ENCODE measurements at regions of chr2 and their contacts with region 1.

Region 1: DNA sequence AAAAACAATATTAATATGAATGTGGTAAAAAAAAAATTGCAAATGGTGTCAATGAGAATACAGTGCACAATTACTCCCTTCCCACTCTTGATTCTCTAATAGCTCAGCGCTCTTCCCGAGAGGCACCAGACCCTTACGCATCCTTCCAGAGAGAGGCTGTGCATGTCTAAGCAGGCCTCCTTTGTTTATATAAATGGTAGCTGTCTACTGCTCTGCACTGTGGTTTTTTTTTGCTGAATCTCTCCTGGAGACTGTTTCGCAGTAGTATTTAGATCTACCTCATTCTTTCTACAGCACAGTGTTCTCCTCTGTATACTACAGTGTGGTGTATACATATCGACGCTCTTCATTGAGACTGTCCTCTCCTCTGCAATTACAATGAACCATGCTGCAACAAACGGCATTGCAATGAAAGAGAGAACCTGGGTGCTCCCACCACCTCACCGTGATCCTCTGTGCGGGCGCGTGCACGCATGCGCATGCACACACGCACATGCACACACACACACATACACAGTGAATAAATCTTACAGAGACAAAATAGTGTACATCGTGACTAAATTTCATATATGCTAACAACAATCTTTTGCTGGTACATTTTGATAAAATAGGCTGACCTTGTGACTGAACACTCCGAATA is 19.4 kb downstream of the SEPTIN10 start:
- DNase-seq: no peak
- ATAC-seq: no peak
- H3K4me3 ChIP-seq: no peak overlapping the region
- H3K27ac ChIP-seq: no peak overlapping the region
- H3K4me1 ChIP-seq: peaks cover 16% of the 10 kb centered on the region
- H3K27me3 ChIP-seq: no peaks in the 10 kb centered on the region
- CTCF ChIP-seq: no peak
- EP300 ChIP-seq: no peak
- POLR2A ChIP-seq: no peak
- RAD21 ChIP-seq: no peak

Region 2: DNA sequence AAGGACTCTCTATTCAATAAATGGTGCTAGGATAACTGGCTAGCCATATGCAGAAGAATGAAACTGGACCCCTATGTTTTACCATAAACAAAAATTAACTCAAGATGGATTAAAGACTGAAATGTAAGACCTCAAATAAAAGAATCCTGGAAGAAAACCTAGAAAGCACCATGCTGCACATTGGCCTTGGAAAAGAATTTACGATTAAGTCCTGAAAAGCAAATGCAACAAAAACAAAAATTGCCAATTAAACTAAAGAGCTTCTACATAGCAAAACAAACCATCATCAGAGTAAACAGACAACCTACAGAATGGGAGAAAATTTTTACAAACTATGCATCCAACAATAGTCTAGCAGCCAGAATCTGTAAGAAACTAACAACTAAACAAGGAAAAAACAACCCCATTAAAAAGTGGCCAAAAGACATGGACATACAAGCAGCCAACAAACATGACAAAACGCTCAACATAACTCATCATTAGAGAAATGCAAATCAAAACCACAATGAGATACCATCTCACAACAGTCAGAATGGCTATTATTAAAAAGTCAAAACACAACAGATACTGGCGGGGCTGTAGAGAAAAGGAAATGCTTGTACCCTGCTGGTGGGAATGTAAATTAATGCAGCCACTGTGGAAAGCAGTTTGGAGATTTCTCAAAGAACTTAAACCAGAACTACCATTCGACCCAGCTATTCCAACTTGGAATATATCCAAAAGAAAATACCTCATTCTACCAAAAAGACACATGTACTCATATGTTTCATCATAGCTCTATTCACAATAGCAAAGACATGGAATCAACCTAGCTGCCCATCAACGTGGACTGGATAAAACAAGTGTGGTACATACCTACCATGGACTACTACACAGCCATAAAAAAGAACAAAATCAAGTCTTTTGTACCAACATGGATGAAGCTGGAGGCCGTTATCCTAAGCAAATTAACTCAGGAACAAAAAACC is 11.2 kb before region 1 on chr2:
- CTCF ChIA-PET with region 1: interaction called, 6 read pairs
- POLR2A ChIA-PET with region 1: interaction called, 3 read pairs
- RAD21 ChIA-PET with region 1: interaction called, 4 read pairs
- SMC1A ChIA-PET with region 1: interaction called, 11 read pairs
- in situ Hi-C with region 1: no loop called
- intact Hi-C with region 1: no loop called
- DNase-seq: peak; percentile 45
- ATAC-seq: peak; percentile 84
- H3K4me3 ChIP-seq: no peak overlapping the region
- H3K27ac ChIP-seq: peak overlapping the region; percentile 50
- H3K4me1 ChIP-seq: peaks cover 27% of the 10 kb centered on the region
- H3K27me3 ChIP-seq: no peaks in the 10 kb centered on the region
- CTCF ChIP-seq: no peak
- EP300 ChIP-seq: peak in 1 of 2 experiments; percentile 46; a peak in 1 of 4 replicates
- POLR2A ChIP-seq: no peak
- RAD21 ChIP-seq: no peak

Region 3: DNA sequence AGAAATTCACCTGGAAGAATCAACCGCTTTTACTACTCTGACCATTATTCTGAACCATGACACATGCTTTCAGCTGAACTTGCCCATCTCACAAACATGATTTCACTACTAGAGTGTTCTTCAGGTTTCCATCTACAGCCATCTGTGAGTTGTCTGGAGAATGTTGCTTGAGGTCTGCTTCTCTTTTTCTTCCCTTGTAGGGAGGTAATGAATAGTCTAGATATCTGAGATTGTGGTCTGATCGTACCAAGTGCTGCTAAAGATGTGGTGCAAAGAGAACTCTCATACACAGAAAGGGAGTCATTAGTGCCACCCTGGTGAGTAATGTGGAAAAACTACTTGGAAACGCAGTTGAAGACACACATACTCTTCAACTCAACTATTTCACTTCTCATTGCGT is 30.0 kb after region 1 on chr2:
- CTCF ChIA-PET with region 1: no interaction called
- POLR2A ChIA-PET with region 1: no interaction called
- RAD21 ChIA-PET with region 1: no interaction called
- SMC1A ChIA-PET with region 1: no interaction called
- in situ Hi-C with region 1: no loop called
- intact Hi-C with region 1: no loop called
- DNase-seq: no peak
- ATAC-seq: peak; percentile 38
- H3K4me3 ChIP-seq: no peak overlapping the region
- H3K27ac ChIP-seq: no peak overlapping the region
- H3K4me1 ChIP-seq: 0 out of 2 replicates have a peak, but pooled peaks cover 1% of the 10 kb centered on the region
- H3K27me3 ChIP-seq: no peaks in the 10 kb centered on the region
- CTCF ChIP-seq: no peak
- EP300 ChIP-seq: no peak
- POLR2A ChIP-seq: no peak
- RAD21 ChIP-seq: no peak